ENCODE measurements at regions of chr10 and their contacts with region 1.

Region 1: DNA sequence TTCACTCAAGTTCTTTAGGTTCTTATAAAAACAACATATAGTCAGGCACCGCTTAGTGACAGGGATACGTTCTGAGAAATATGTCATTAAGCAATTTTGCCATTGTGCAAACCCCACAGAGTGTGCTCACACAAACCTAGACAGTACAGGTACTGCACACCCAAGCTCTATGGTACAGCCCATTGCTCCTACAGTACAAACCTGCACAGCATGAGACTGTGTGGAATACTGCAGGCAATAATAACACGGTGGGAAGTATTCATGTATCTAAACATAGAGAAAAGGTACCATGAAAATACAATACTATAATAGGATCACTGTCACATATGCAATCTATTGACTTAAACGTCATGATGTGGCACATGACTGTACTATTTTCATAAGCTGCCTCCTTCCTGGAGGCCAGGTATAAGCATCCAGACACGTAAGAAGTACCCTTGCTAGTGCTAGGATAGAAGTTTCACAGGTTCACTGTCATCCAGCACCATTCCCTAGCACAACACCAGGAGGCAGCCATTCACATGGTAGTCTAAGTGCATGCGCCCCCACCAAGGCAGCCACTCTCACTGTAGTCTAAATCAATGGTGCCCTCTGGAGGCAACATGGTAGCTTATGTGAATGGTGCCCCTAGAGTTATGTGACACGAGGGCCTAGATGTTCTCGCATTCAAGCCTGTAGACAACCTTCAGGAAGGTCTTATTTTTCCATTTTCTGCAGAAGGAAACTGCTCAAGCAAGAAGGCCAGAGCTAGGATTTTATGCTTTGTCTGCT is 98.5 kb downstream of the ARHGAP22 start:
- H3K4me3 Mint-ChIP-seq: no peak overlapping the region
- H3K27ac Mint-ChIP-seq: peak overlapping the region; percentile 81
- H3K4me1 Mint-ChIP-seq: peaks cover 97% of the 10 kb centered on the region
- H3K27me3 Mint-ChIP-seq: peaks cover 11% of the 10 kb centered on the region

Region 2: DNA sequence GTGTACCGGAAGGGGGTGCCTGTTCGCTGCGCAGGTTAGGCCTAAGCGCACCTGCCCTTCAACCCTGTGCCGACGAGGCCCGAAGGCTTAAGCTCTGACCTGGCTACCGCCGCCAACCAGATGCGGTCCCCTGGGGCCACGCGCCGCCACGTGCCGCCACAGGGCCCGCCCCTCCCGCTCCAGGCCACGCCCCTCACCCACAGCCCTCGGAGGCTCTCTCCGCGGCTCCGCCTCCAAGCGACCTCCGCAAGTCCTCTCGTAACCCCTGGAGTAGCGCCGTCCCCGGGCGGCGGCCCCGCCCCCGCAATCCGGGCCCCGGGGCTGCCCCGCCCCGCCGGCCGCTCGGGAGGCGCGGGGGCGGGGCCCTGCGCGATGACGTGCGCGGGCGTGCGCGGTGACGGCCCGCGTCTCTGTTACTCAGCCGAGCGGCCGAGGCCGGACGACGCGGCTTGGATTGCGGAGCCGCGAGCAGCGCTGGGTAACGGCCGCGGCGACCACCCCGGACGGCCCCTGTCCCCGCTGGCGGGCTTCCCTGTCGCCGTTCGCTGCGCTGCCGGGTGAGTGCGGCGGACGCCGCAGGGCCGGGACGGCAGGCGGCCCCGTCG is 200.0 kb before region 1 on chr10 and contains the start of gene MAPK8:
- intact Hi-C with region 1: loop called (anchors 5 kb)
- H3K4me3 Mint-ChIP-seq: peak within 1 kb of the TSS; percentile 81
- H3K27ac Mint-ChIP-seq: peak within 1 kb of the TSS; percentile 71
- H3K4me1 Mint-ChIP-seq: peaks cover 18% of the 10 kb centered on the region
- H3K27me3 Mint-ChIP-seq: no peaks in the 10 kb centered on the region

Region 3: DNA sequence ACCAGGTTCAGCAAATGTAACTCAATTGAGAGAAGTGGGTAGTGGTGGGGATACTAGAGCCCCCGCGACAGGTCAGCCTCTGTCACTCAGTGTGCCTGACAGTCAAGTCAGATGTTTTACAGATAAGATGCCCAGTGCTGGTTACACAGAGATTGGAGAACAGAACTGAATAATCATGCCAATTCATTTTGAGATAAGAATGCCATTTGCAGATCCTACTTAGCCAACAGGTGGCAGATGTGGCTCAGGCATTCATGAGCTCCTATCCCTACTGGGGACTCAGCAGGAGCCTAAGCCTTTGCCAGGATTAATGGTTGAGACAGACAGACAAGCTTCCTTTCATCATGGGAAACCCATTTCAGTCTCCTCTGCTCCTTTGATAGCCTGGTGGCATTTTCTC is 62.1 kb before region 1 on chr10:
- intact Hi-C with region 1: loop called (anchors 5 kb)
- H3K4me3 Mint-ChIP-seq: no peak overlapping the region
- H3K27ac Mint-ChIP-seq: no peak overlapping the region
- H3K4me1 Mint-ChIP-seq: peaks cover 12% of the 10 kb centered on the region
- H3K27me3 Mint-ChIP-seq: peaks cover 3% of the 10 kb centered on the region